Natural killer cell (primary cell): ENCODE measurements at regions of chr11 and their contacts with region 1.

Region 1: GRCh38 chr11:6757373-6757967 is 14.3 kb downstream of the OR2AG2 start:
- DNase-seq: peak; percentile 28 to 84
- ATAC-seq: peak; percentile 73 to 84 (median 84)
- H3K4me3 ChIP-seq: no peak overlapping the region
- H3K4me3 Mint-ChIP-seq: no peak overlapping the region
- H3K27ac ChIP-seq: no peak overlapping the region
- H3K27ac Mint-ChIP-seq: no peak overlapping the region
- H3K4me1 ChIP-seq: no peaks in the 10 kb centered on the region
- H3K4me1 Mint-ChIP-seq: no peaks in the 10 kb centered on the region
- H3K27me3 ChIP-seq: no peaks in the 10 kb centered on the region
- H3K27me3 Mint-ChIP-seq: peaks cover 2 to 4% of the 10 kb centered on the region in 2 donors
- CTCF ChIP-seq: peak; percentile 78

Region 2: GRCh38 chr11:6285019-6285418 is 472.5 kb before region 1 on chr11:
- intact Hi-C with region 1: no loop called
- DNase-seq: no peak
- ATAC-seq: no peak
- H3K4me3 ChIP-seq: no peak overlapping the region
- H3K4me3 Mint-ChIP-seq: no peak overlapping the region
- H3K27ac ChIP-seq: no peak overlapping the region
- H3K27ac Mint-ChIP-seq: no peak overlapping the region
- H3K4me1 ChIP-seq: no peaks in the 10 kb centered on the region
- H3K4me1 Mint-ChIP-seq: no peaks in the 10 kb centered on the region
- H3K27me3 ChIP-seq: peaks cover 2% of the 10 kb centered on the region
- H3K27me3 Mint-ChIP-seq: peaks cover 37 to 52% of the 10 kb centered on the region in 2 donors
- CTCF ChIP-seq: no peak

Region 3: GRCh38 chr11:6377902-6378639 is 379.4 kb before region 1 on chr11:
- intact Hi-C with region 1: loop called (anchors 2 kb)
- DNase-seq: peak in 1 of 2 donors; percentile 50
- ATAC-seq: peak in 1 of 3 donors; percentile 33
- H3K4me3 ChIP-seq: no peak overlapping the region
- H3K4me3 Mint-ChIP-seq: no peak overlapping the region
- H3K27ac ChIP-seq: peak overlapping the region; percentile 3
- H3K27ac Mint-ChIP-seq: no peak overlapping the region
- H3K4me1 ChIP-seq: peaks cover 4% of the 10 kb centered on the region
- H3K4me1 Mint-ChIP-seq: no peaks in the 10 kb centered on the region
- H3K27me3 ChIP-seq: no peaks in the 10 kb centered on the region
- H3K27me3 Mint-ChIP-seq: no peaks in the 10 kb centered on the region
- CTCF ChIP-seq: no peak

Region 4: DNA sequence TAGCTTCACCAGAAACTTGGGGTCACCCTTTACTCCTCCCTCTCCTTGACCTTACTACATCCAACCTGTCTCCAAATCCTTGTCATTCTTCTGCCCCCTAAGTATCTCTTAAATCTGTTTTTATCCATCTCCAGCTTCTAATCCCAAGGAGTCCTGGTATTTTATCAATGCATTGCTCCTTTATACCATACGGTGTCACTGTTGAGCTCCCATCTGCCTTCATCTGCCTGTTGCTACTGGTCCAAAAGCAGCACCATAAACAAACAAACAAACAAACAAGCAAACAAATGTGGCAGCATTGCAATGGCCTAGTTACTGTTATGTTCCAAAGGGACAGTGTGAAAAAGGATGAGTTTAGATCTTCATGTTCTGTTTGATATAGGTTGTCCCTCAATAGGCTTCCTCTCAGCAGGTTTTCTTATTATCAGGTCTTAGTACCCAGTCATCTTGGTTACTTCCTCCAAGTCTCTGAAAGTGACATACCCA is 226.2 kb before region 1 on chr11:
- intact Hi-C with region 1: loop called (anchors 1 kb)
- DNase-seq: peak in 1 of 2 donors; percentile 72
- ATAC-seq: peak; percentile 69 to 86 (median 76)
- H3K4me3 ChIP-seq: no peak overlapping the region
- H3K4me3 Mint-ChIP-seq: no peak overlapping the region
- H3K27ac ChIP-seq: no peak overlapping the region
- H3K27ac Mint-ChIP-seq: no peak overlapping the region
- H3K4me1 ChIP-seq: no peaks in the 10 kb centered on the region
- H3K4me1 Mint-ChIP-seq: peaks cover 7% of the 10 kb centered on the region in 2 donors
- H3K27me3 ChIP-seq: no peaks in the 10 kb centered on the region
- H3K27me3 Mint-ChIP-seq: no peaks in the 10 kb centered on the region
- CTCF ChIP-seq: peak; percentile 77

Region 5: DNA sequence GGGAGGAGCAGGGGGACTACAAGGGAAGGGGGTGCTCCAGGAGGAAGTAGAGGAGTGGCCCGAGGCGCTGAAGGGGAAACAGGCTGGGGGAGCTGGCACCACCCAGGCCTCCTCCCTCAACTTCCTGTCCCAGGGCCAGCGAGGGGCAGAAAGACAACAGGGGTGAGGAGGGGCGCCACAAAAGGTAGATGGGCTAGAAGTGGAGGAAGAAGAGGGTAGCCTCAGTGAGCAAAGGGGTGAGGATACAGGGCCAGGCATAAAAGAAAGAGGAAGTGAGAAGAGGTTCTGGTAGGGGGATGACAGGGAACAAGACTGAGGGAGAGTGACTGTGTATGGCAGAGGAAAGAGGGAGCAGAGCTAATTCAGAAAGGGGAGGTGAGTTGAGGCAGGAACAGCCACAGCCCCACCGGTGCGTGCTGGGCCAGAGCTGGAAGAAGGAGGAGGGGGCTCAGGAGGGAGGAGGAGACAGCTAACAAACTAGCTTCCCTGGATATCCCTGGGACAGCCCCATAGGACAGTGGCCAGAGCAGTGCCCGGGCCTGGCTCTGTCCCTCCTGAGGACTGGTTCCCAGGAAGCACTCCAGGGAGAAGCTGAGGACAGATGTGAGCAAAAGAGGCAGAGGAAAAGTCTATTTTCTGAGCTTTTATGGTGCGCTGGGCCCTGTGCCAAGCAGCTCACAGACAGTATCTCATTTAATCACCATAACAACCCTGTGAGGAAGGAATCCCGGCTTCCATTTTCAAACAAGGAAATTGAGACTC is 110.4 kb before region 1 on chr11:
- intact Hi-C with region 1: no loop called
- DNase-seq: peak in 1 of 2 donors; percentile 57
- ATAC-seq: peak in 2 of 3 donors; percentile 43 to 53
- H3K4me3 ChIP-seq: no peak overlapping the region
- H3K4me3 Mint-ChIP-seq: no peak overlapping the region
- H3K27ac ChIP-seq: peak overlapping the region; percentile 62
- H3K27ac Mint-ChIP-seq: no peak overlapping the region
- H3K4me1 ChIP-seq: peaks cover 33% of the 10 kb centered on the region
- H3K4me1 Mint-ChIP-seq: no peaks in the 10 kb centered on the region
- H3K27me3 ChIP-seq: no peaks in the 10 kb centered on the region
- H3K27me3 Mint-ChIP-seq: no peaks in the 10 kb centered on the region
- CTCF ChIP-seq: no peak

Region 6: GRCh38 chr11:6705905-6706535 is 51.5 kb before region 1 on chr11:
- intact Hi-C with region 1: loop called (anchors 5 kb)
- DNase-seq: peak in 1 of 2 donors; percentile 73
- ATAC-seq: peak; percentile 58 to 82 (median 65)
- H3K4me3 ChIP-seq: no peak overlapping the region
- H3K4me3 Mint-ChIP-seq: no peak overlapping the region
- H3K27ac ChIP-seq: peak overlapping the region; percentile 26
- H3K27ac Mint-ChIP-seq: peak overlapping the region; percentile 47 to 84
- H3K4me1 ChIP-seq: no peaks in the 10 kb centered on the region
- H3K4me1 Mint-ChIP-seq: peaks cover 24 to 29% of the 10 kb centered on the region in 2 donors
- H3K27me3 ChIP-seq: no peaks in the 10 kb centered on the region
- H3K27me3 Mint-ChIP-seq: no peaks in the 10 kb centered on the region
- CTCF ChIP-seq: peak; percentile 87

Region 7: DNA sequence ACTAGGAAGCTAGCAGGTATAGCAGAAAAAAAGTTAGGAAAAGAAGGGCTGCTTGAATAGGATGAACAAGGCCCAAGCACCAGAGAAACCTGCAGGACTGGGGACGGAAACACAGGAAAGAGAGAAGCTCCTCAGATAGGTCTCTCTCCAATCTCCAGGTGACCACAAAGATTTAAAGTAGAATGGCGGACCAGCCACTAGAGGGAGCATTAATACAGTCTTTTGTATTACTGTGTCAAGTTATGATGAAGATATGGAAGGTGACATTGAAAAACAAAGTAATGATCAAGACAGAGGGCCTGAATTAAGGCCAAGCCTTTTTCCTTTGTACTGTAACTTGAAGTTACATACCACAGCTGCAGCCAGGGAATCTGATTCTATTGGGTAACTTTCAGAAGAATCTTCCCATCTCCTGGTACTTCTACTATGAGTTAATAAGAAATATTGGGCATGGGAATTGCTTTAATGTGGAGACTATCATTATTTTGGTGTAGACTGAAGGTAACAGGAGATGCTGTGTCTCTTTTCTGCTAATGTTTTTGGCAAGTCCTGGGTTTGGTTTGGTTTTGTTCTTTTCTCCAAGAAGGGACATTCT is 19.5 kb before region 1 on chr11:
- intact Hi-C with region 1: loop called (anchors 1 kb)
- DNase-seq: peak; percentile 39 to 88
- ATAC-seq: peak; percentile 79 to 88 (median 81)
- H3K4me3 ChIP-seq: no peak overlapping the region
- H3K4me3 Mint-ChIP-seq: peak overlapping the region; percentile 39
- H3K27ac ChIP-seq: peak overlapping the region; percentile 0
- H3K27ac Mint-ChIP-seq: peak overlapping the region; percentile 91 to 92
- H3K4me1 ChIP-seq: peaks cover 32% of the 10 kb centered on the region
- H3K4me1 Mint-ChIP-seq: peaks cover 68 to 70% of the 10 kb centered on the region in 2 donors
- H3K27me3 ChIP-seq: no peaks in the 10 kb centered on the region
- H3K27me3 Mint-ChIP-seq: no peaks in the 10 kb centered on the region
- CTCF ChIP-seq: peak; percentile 79

Region 8: DNA sequence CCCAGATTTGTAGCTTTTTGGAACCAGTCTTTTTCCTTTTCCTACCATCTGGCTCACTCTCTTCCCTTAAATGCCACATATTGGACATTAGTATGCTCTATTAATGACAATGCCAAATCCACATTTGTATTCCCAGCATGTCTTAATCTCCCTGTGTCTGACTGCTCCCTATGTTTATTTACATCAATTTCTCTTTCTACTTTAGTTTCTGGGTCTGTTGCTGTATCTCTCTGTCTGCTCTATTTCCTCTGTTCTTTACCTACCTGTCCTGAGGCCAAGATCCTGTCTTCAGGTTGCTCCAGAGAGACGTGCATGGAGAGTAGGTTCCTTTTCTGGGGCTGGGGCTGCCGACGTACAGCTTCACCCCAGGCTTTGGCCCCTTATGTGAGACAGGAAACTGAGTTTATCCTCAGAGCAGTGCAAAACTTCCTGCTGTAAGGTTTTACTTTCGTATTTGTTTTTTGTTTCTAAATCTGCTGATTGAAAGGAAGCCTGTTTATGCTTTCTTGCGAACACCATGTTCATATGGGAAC is 11.3 kb before region 1 on chr11:
- intact Hi-C with region 1: loop called (anchors 1 kb)
- DNase-seq: peak; percentile 38 to 78
- ATAC-seq: peak; percentile 87 to 91 (median 88)
- H3K4me3 ChIP-seq: peak overlapping the region; percentile 84
- H3K4me3 Mint-ChIP-seq: no peak overlapping the region
- H3K27ac ChIP-seq: peak overlapping the region; percentile 91
- H3K27ac Mint-ChIP-seq: no peak overlapping the region
- H3K4me1 ChIP-seq: peaks cover 10% of the 10 kb centered on the region
- H3K4me1 Mint-ChIP-seq: peaks cover 0 to under 1% of the 10 kb centered on the region in 2 donors
- H3K27me3 ChIP-seq: no peaks in the 10 kb centered on the region
- H3K27me3 Mint-ChIP-seq: no peaks in the 10 kb centered on the region
- CTCF ChIP-seq: no peak